ENCODE measurements at regions of chr1 and their contacts with region 1.

Region 1: DNA sequence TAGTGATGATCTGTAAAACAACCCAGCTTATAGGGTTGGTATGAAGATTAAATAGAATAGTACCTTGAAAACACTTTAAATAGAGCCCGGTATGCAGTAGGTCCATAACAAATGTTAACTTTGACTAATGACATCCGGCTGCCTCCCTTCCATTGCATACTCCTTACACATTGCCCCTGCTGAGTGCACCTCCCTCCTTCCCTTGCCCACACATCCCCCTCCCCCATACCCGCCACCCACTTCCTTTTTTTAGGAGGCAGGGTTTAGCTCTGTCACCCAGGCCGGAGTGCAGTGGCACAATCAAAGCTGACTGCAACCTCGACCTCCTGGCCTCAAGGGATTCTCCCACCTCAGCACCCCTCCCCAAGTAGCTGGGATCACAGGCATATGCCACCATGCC is 24.4 kb upstream of the ZC3H12A start:
- DNase-seq: no peak
- H3K4me3 ChIP-seq: no peak overlapping the region
- H3K27ac ChIP-seq: no peak overlapping the region
- H3K4me1 ChIP-seq: peaks cover 5% of the 10 kb centered on the region
- H3K27me3 ChIP-seq: no peaks in the 10 kb centered on the region; the same call in 1 of the 2 replicates

Region 2: DNA sequence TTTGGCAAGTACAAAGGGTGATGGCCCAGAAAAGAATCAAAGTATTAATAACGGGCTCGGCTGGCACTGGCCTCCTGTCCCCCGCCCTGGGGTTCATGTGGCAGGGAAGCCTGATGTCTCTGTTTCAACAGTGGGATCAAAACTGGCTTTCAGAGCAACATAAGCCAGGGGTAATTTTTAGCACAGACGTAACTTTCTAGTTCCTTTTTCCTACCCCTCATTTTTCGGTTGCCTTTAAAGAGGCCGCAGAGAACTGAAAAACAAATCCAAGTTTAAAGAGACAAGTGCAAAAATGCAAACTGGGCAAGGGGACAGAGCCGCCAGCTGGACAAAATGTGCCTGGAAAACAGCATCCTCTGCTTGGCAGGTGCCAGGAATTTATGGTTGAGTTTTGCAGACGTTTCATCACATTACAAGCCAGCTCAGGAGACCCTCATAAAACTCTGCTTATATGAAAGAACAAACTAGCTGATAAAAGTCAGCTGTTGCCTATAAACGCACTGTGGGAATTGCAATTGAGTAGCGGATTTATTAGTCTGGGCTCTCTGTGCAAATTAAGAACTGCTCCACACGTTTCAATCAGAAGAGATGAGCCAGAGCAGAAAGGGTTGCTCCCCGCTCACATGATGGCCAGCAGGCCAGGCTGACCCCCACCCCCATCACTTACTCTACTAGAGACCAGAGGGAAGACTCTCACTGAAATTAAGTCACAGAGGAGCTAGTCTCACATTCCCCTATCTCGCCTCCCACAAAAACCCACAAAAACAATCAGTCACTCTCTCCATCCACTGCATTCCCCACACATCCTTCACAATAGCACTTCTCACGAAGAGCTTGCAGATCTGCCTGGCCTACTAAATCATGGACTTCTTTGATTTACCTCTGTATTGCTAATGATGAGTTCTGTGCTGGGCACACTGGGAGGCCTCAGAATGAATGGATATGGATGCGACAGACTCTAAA is 226.6 kb after region 1 on chr1:
- in situ Hi-C with region 1: loop called (anchors 10 kb)
- DNase-seq: no peak
- H3K4me3 ChIP-seq: no peak overlapping the region
- H3K27ac ChIP-seq: no peak overlapping the region
- H3K4me1 ChIP-seq: no peaks in the 10 kb centered on the region
- H3K27me3 ChIP-seq: peaks cover 11% of the 10 kb centered on the region

Measured in GM23248 (cell line).